ENCODE measurements at regions of chr12 and their contacts with region 1.

Region 1: GRCh38 chr12:82358200-82359114 is at the starts of genes CCDC59 and METTL25:
- DNase-seq: peak; percentile 99
- H3K4me3 ChIP-seq: peak within 1 kb of the TSS; percentile 72 to 95 (median 86)
- H3K27ac ChIP-seq: peak within 1 kb of the TSS; percentile 94 to 98 (median 96)
- H3K4me1 ChIP-seq: peaks cover 26 to 71% (median 51%) of the 10 kb centered on the region in 6 donors
- H3K27me3 ChIP-seq: no peaks in the 10 kb centered on the region
- CTCF ChIP-seq: peak in 10 of 11 experiments; percentile 96 to 100 (median 99)
- POLR2A ChIP-seq: peak; percentile 22 to 56 (median 27)
- total RNA-seq, gene CCDC59: 28.0 to 55.1 (median 35.2) TPM
- total RNA-seq, gene METTL25: 17.1 to 21.1 (median 18.2) TPM

Region 2: GRCh38 chr12:82264752-82265151 is 93.7 kb before region 1 on chr12:
- intact Hi-C with region 1: no loop called
- DNase-seq: no peak
- H3K4me3 ChIP-seq: no peak overlapping the region
- H3K27ac ChIP-seq: no peak overlapping the region
- H3K4me1 ChIP-seq: no peaks in the 10 kb centered on the region
- H3K27me3 ChIP-seq: no peaks in the 10 kb centered on the region
- CTCF ChIP-seq: no peak
- POLR2A ChIP-seq: no peak

Region 3: GRCh38 chr12:82407481-82407880 is 49.0 kb after region 1 on chr12:
- intact Hi-C with region 1: no loop called
- DNase-seq: no peak
- H3K4me3 ChIP-seq: no peak overlapping the region
- H3K27ac ChIP-seq: no peak overlapping the region
- H3K4me1 ChIP-seq: no peaks in the 10 kb centered on the region
- H3K27me3 ChIP-seq: no peaks in the 10 kb centered on the region
- CTCF ChIP-seq: no peak
- POLR2A ChIP-seq: no peak

Region 4: DNA sequence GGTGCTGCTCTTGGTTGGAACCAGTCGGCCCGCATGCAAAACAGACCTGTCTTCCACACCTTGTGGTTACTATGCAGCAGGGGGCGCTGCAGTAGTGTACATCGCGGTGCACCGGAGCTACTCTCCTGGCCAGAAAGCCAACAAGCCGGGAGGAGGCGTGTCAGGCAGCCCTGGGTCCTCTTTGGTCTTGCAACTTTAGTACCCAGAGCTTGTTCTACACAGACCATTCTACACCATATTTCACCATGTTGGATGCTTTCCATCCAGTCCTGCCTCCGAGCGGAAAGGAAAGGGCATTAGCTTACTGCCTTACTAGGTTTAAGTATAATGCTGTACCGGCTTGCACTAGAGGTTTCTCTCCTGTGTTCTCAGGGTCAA is 327.3 kb after region 1 on chr12:
- intact Hi-C with region 1: loop called (anchors 10 kb)
- DNase-seq: peak; percentile 98
- H3K4me3 ChIP-seq: peak overlapping the region; percentile 75 to 98 (median 92)
- H3K27ac ChIP-seq: peak overlapping the region; percentile 75 to 95 (median 93)
- H3K4me1 ChIP-seq: peaks cover 0 to 33% (median 12%) of the 10 kb centered on the region in 6 donors
- H3K27me3 ChIP-seq: no peaks in the 10 kb centered on the region
- CTCF ChIP-seq: peak; percentile 76 to 93 (median 87)
- POLR2A ChIP-seq: no peak